ENCODE measurements at regions of chr16 and their contacts with region 1.

Region 1: GRCh38 chr16:81745704-81746558 is 33.2 kb upstream of the PLCG2 start:
- DNase-seq: peak; percentile 54 to 85 (median 70)
- ATAC-seq: peak; percentile 97
- H3K4me3 ChIP-seq: peak overlapping the region; percentile 57
- H3K4me3 Mint-ChIP-seq: peak overlapping the region; percentile 84
- H3K27ac ChIP-seq: no peak overlapping the region
- H3K27ac Mint-ChIP-seq: peak overlapping the region; percentile 53
- H3K4me1 ChIP-seq: peaks cover 14% of the 10 kb centered on the region
- H3K4me1 Mint-ChIP-seq: peaks cover 10% of the 10 kb centered on the region
- H3K27me3 ChIP-seq: no peaks in the 10 kb centered on the region
- H3K27me3 Mint-ChIP-seq: no peaks in the 10 kb centered on the region
- CTCF ChIP-seq: no peak

Region 2: DNA sequence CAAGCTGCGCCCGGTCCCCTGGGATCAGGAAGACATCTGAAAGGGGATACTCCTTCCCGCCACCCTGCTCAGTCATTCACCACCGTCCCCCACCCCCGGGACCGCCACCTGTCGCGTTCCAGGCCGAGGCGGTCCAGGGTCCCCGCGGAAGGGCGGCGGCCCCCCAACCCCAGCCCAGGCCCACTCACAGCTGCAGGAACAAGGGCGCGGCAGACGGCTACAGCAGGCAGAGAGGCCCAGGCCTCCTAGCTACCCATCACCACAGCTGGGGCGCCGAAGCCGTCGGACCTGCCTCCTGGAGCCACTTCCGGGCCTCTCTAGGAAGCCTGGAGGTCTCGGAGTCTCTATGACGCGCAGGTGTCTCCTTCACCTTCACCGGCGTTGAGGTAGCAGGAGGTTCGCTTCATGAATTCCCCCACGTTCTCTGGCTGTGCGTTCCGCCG is 265.3 kb after region 1 on chr16 and contains the start of gene SDR42E1:
- CTCF ChIA-PET with region 1: no interaction called
- POLR2A ChIA-PET with region 1: no interaction called
- intact Hi-C with region 1: loop called in 1 of 2 experiments (anchors 5 kb)
- DNase-seq: peak; percentile 22 to 84 (median 66)
- ATAC-seq: peak; percentile 97
- H3K4me3 ChIP-seq: peak within 1 kb of the TSS; percentile 63
- H3K4me3 Mint-ChIP-seq: peak within 1 kb of the TSS; percentile 92
- H3K27ac ChIP-seq: no peak within 1 kb of the TSS
- H3K27ac Mint-ChIP-seq: peak within 1 kb of the TSS; percentile 90
- H3K4me1 ChIP-seq: peaks cover 20% of the 10 kb centered on the region
- H3K4me1 Mint-ChIP-seq: peaks cover 29% of the 10 kb centered on the region
- H3K27me3 ChIP-seq: peaks cover 0 to 6% of the 10 kb centered on the region in 2 experiments
- H3K27me3 Mint-ChIP-seq: peaks cover 20% of the 10 kb centered on the region
- CTCF ChIP-seq: no peak
- total RNA-seq, gene SDR42E1: 4.5 to 7.6 TPM

Measured in CD4-positive, alpha-beta T cell (primary cell).